T-cell (primary cell): ENCODE measurements at regions of chr3 and their contacts with region 1.

Region 1: GRCh38 chr3:156554842-156555687 is at the start of gene SSR3:
- DNase-seq: peak; percentile 95 to 99 (median 98)
- ATAC-seq: peak; percentile 98 to 100 (median 99)
- H3K4me3 ChIP-seq: peak within 1 kb of the TSS; percentile 63 to 89
- H3K4me3 Mint-ChIP-seq: peak within 1 kb of the TSS; percentile 90 to 97 (median 96)
- H3K27ac ChIP-seq: peak within 1 kb of the TSS; percentile 65
- H3K27ac Mint-ChIP-seq: peak within 1 kb of the TSS; percentile 91 to 92
- H3K4me1 ChIP-seq: peaks cover 11 to 15% of the 10 kb centered on the region in 2 experiments
- H3K4me1 Mint-ChIP-seq: peaks cover 48 to 55% (median 49%) of the 10 kb centered on the region in 3 donors
- H3K27me3 ChIP-seq: no peaks in the 10 kb centered on the region
- H3K27me3 Mint-ChIP-seq: no peaks in the 10 kb centered on the region
- total RNA-seq, gene SSR3: 68.0 to 112 (median 92.0) TPM

Region 2: DNA sequence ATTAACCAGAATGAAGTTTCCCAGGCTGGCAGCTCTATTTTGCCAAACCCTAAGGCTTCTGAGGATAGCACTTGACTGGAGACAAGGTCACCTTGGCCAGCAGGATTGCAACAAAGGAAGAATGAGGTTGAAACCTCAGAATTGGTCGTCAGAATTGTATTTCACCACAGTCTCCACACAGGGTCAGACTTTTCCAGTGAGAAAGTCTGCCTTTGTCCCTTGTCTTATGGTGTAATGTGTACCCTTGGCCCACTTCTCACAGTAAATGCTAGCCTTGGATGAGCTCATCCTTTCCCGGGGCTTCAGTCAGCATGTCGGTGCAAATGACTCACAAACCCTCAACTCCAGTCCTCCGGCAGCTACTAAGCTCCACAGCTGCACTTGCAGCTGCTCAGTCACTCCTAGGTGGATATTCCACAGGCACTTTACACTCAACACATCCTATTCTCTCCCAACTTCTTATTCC is 19.9 kb before region 1 on chr3:
- CTCF ChIA-PET with region 1: interaction called in 1 of 2 experiments, 12 read pairs
- POLR2A ChIA-PET with region 1: interaction called in 1 of 2 experiments, 11 read pairs
- DNase-seq: no peak
- ATAC-seq: no peak
- H3K4me3 ChIP-seq: no peak overlapping the region
- H3K4me3 Mint-ChIP-seq: no peak overlapping the region
- H3K27ac ChIP-seq: no peak overlapping the region
- H3K27ac Mint-ChIP-seq: no peak overlapping the region
- H3K4me1 ChIP-seq: no peaks in the 10 kb centered on the region
- H3K4me1 Mint-ChIP-seq: no peaks in the 10 kb centered on the region
- H3K27me3 ChIP-seq: no peaks in the 10 kb centered on the region
- H3K27me3 Mint-ChIP-seq: no peaks in the 10 kb centered on the region

Region 3: GRCh38 chr3:156674911-156675829 is 120.1 kb after region 1 on chr3:
- CTCF ChIA-PET with region 1: interaction called, 5 to 12 read pairs
- POLR2A ChIA-PET with region 1: interaction called in 1 of 2 experiments, 4 read pairs
- DNase-seq: peak in 34 of 35 experiments; percentile 5 to 54 (median 32)
- ATAC-seq: peak; percentile 8 to 37 (median 14)
- H3K4me3 ChIP-seq: peak overlapping the region; percentile 92 to 95
- H3K4me3 Mint-ChIP-seq: peak overlapping the region; percentile 87 to 94 (median 90)
- H3K27ac ChIP-seq: peak overlapping the region; percentile 88
- H3K27ac Mint-ChIP-seq: peak overlapping the region; percentile 87 to 97
- H3K4me1 ChIP-seq: peaks cover 19 to 25% of the 10 kb centered on the region in 2 experiments
- H3K4me1 Mint-ChIP-seq: peaks cover 48 to 54% (median 51%) of the 10 kb centered on the region in 3 donors
- H3K27me3 ChIP-seq: no peaks in the 10 kb centered on the region
- H3K27me3 Mint-ChIP-seq: no peaks in the 10 kb centered on the region

Region 4: GRCh38 chr3:158109804-158110657 is 1555.0 kb after region 1 on chr3 and contains the start of gene RSRC1:
- CTCF ChIA-PET with region 1: interaction called in 1 of 2 experiments, 11 read pairs
- POLR2A ChIA-PET with region 1: no interaction called
- DNase-seq: peak; percentile 50 to 84 (median 72)
- ATAC-seq: peak; percentile 84 to 90 (median 86)
- H3K4me3 ChIP-seq: peak within 1 kb of the TSS; percentile 71 to 93
- H3K4me3 Mint-ChIP-seq: peak within 1 kb of the TSS; percentile 89 to 96 (median 89)
- H3K27ac ChIP-seq: peak within 1 kb of the TSS; percentile 48
- H3K27ac Mint-ChIP-seq: peak within 1 kb of the TSS; percentile 50 to 73
- H3K4me1 ChIP-seq: peaks cover 26 to 36% of the 10 kb centered on the region in 2 experiments
- H3K4me1 Mint-ChIP-seq: peaks cover 66 to 76% (median 69%) of the 10 kb centered on the region in 3 donors
- H3K27me3 ChIP-seq: peaks cover 13 to 26% of the 10 kb centered on the region in 2 experiments
- H3K27me3 Mint-ChIP-seq: peaks cover 33 to 37% of the 10 kb centered on the region in 2 donors
- total RNA-seq, gene RSRC1: 29.9 to 35.0 (median 31.1) TPM